Right cardiac atrium (tissue), 5 donors: ENCODE measurements at regions of chr12 and their contacts with region 1.

Region 1: DNA sequence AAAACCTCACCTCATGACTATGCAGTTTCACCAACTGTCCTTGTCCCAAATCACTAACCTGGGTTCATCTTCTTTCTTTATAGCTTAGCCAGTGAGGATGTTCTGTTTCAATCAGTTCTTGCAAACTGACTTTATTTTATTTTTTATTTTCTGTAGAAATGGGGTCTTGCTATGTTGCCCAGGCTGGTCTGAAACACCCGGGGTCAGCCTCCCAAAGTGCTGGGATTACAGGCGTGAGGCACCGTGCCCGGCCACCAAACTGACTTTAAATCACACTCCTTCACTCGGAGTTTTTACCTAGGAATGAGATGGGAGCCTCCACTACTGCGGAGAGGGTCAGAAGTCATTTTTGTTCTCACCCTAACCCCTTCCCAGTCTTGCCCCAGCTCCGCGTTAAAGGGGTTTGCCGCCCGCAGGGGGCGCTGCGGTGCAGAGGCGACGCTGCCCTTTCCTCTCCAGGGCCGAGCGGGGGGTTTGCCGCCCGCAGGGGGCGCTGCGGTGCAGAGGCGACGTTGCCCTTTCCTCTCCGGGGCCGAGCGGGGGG is 7.0 kb upstream of the B4GALNT3 start:
- DNase-seq: peak; percentile 26 to 86 (median 73)
- ATAC-seq: no peak
- H3K4me3 ChIP-seq: no peak overlapping the region
- H3K27ac ChIP-seq: no peak overlapping the region
- H3K4me1 ChIP-seq: peaks cover 3% of the 10 kb centered on the region
- H3K27me3 ChIP-seq: no peaks in the 10 kb centered on the region

Region 2: GRCh38 chr12:295132-295531 is 157.6 kb before region 1 on chr12:
- intact Hi-C with region 1: no loop called
- DNase-seq: no peak
- ATAC-seq: no peak
- H3K4me3 ChIP-seq: no peak overlapping the region
- H3K27ac ChIP-seq: no peak overlapping the region
- H3K4me1 ChIP-seq: no peaks in the 10 kb centered on the region
- H3K27me3 ChIP-seq: no peaks in the 10 kb centered on the region

Region 3: GRCh38 chr12:503111-503761 is 50.5 kb after region 1 on chr12:
- intact Hi-C with region 1: loop called in 1 of 4 experiments (anchors 5 kb)
- DNase-seq: no peak
- ATAC-seq: peak; percentile 34 to 52
- H3K4me3 ChIP-seq: no peak overlapping the region
- H3K27ac ChIP-seq: peak overlapping the region; percentile 36
- H3K4me1 ChIP-seq: peaks cover 4% of the 10 kb centered on the region
- H3K27me3 ChIP-seq: no peaks in the 10 kb centered on the region

Region 4: GRCh38 chr12:546921-547845 is 94.4 kb after region 1 on chr12:
- intact Hi-C with region 1: loop called in 3 of 4 experiments (anchors 5 kb)
- DNase-seq: peak; percentile 70 to 90 (median 85)
- ATAC-seq: peak; percentile 66 to 83
- H3K4me3 ChIP-seq: no peak overlapping the region
- H3K27ac ChIP-seq: no peak overlapping the region
- H3K4me1 ChIP-seq: peaks cover 6% of the 10 kb centered on the region
- H3K27me3 ChIP-seq: no peaks in the 10 kb centered on the region